ENCODE measurements at regions of chr16 and their contacts with region 1.

Region 1: GRCh38 chr16:12819126-12820117 is 15.7 kb upstream of the CPPED1 start:
- DNase-seq: peak; percentile 64
- H3K4me3 Mint-ChIP-seq: no peak overlapping the region
- H3K27ac Mint-ChIP-seq: no peak overlapping the region
- H3K4me1 Mint-ChIP-seq: peaks cover 10% of the 10 kb centered on the region
- H3K27me3 Mint-ChIP-seq: peaks cover 8% of the 10 kb centered on the region

Region 2: DNA sequence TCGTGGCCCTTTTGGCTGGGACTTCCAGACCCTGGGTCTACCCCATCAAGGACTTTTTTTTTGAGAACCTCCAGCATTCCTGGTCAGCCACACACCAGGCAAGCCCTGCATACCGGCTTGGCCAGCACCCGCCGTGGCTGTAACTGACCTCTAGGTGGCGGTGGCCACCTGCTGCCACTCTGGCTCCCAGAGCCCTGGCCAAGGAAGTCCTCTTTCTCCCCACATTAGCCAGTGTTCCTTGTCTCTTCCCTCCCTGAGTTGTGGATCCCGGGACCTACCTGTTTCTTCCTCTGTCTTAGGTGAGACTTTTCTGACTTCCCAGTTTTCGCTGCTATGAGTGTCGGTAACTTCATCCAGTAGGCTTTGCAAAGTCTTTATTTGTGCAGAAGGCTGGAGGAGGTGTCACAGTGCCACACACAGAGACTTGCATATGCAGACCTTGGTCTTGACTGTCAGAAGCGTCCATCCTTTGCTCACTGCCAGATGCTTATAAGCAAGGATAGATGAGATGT is 364.1 kb before region 1 on chr16:
- intact Hi-C with region 1: loop called (anchors 1 kb)
- DNase-seq: peak; percentile 14
- H3K4me3 Mint-ChIP-seq: no peak overlapping the region
- H3K27ac Mint-ChIP-seq: no peak overlapping the region
- H3K4me1 Mint-ChIP-seq: peaks cover 14% of the 10 kb centered on the region
- H3K27me3 Mint-ChIP-seq: no peaks in the 10 kb centered on the region

Region 3: DNA sequence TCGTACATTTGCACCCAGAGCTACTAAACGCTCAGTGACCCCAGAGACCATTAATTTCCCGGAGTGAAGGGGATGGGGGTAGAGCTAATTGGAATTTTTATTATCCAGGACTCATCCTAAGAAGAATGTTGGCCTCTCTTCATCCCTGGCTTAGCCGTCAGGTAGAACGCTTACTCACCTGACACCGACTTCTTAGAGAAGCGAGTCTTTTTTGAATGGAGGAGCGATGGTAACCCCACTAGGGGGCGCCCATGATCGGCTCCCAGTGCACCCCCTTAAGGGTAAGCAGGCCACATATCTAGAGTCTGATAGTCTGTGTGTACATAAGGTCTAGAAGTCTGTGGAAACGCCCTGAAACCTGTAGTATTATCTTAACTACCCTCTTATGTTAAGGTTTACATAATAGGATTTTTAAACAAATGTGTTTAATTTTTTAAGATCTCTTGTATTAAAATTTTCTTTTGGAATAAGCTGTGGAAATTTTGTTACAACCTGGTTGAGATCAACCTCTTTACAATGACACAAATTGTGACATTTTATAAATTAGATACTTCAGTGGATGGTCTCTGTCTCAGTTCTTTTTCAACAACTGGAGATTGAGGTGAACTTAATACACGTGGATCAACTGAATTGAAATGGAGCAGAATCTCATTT is 245.6 kb before region 1 on chr16:
- intact Hi-C with region 1: loop called (anchors 1 kb)
- DNase-seq: peak; percentile 35
- H3K4me3 Mint-ChIP-seq: no peak overlapping the region
- H3K27ac Mint-ChIP-seq: no peak overlapping the region
- H3K4me1 Mint-ChIP-seq: peaks cover 12% of the 10 kb centered on the region
- H3K27me3 Mint-ChIP-seq: no peaks in the 10 kb centered on the region

Region 4: GRCh38 chr16:12850186-12850585 is 30.8 kb after region 1 on chr16:
- intact Hi-C with region 1: no loop called
- DNase-seq: no peak
- H3K4me3 Mint-ChIP-seq: no peak overlapping the region
- H3K27ac Mint-ChIP-seq: no peak overlapping the region
- H3K4me1 Mint-ChIP-seq: no peaks in the 10 kb centered on the region
- H3K27me3 Mint-ChIP-seq: no peaks in the 10 kb centered on the region

Region 5: DNA sequence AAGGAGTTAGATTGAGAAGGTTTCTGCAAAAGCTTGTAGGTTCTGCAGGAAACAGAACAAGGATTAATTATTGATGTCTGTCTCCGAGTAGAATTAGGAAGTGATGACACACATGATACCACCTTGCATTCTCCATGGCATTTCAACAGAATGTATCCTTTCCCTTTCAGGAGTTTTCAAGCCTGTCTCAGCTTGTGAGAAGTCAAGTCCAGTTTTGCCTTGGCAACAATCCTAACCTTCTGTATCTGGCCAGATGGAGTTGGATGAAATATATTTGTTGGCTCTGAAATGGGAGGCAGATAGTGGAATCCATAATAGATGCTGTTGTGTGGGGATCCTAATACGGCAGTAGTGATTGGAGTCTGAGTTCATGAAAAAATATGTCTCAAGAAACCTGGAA is 317.5 kb after region 1 on chr16:
- intact Hi-C with region 1: no loop called
- DNase-seq: no peak
- H3K4me3 Mint-ChIP-seq: no peak overlapping the region
- H3K27ac Mint-ChIP-seq: no peak overlapping the region
- H3K4me1 Mint-ChIP-seq: no peaks in the 10 kb centered on the region
- H3K27me3 Mint-ChIP-seq: no peaks in the 10 kb centered on the region

Measured in activated T-helper 2 cell treated with anti-CD3 and anti-CD28 coated beads, Interferon-gamma antibody, Interleukin-2, Interleukin-4, amounts not matched to agents 10 μg/mL and 5 μg/mL and 100 μg/mL, durations not matched to agents 14 hours and 24 hours and 36 hours (primary cell).